ENCODE measurements at regions of chr5 and their contacts with region 1.

Region 1: GRCh38 chr5:132489871-132490485 is 595 bp downstream of the IRF1 start:
- DNase-seq: peak; percentile 91
- H3K4me3 ChIP-seq: peak overlapping the region; percentile 84 to 93 (median 90)
- H3K27ac ChIP-seq: peak overlapping the region; percentile 97 to 99 (median 98)
- H3K4me1 ChIP-seq: peaks cover 54 to 76% (median 74%) of the 10 kb centered on the region in 4 donors
- H3K27me3 ChIP-seq: no peaks in the 10 kb centered on the region
- CTCF ChIP-seq: peak; percentile 16 to 41 (median 32)
- EP300 ChIP-seq: no peak
- POLR2A ChIP-seq: no peak

Region 2: DNA sequence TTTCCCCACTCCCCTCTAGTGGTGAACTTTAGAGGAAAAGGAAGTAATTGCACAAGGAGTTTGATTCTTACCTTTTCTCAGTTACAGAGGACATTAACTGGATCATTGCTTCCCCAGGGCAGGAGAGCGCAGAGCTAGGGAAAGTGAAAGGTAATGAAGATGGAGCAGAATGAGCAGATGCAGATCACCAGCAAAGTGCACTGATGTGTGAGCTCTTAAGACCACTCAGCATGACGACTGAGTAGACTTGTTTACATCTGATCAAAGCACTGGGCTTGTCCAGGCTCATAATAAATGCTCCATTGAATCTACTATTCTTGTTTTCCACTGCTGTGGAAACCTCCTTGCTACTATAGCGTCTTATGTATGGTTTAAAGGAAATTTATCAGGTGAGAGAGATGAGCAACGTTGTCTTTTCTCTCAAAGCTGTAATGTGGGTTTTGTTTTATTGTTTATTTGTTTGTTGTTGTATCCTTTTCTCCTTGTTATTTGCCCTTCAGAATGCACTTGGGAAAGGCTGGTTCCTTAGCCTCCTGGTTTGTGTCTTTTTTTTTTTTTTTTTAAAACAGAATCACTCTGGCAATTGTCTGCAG is 95.2 kb before region 1 on chr5:
- intact Hi-C with region 1: no loop called
- DNase-seq: no peak
- H3K4me3 ChIP-seq: no peak overlapping the region
- H3K27ac ChIP-seq: no peak overlapping the region
- H3K4me1 ChIP-seq: peaks cover 9 to 18% (median 16%) of the 10 kb centered on the region in 4 donors
- H3K27me3 ChIP-seq: no peaks in the 10 kb centered on the region
- CTCF ChIP-seq: no peak
- EP300 ChIP-seq: no peak
- POLR2A ChIP-seq: no peak

Region 3: DNA sequence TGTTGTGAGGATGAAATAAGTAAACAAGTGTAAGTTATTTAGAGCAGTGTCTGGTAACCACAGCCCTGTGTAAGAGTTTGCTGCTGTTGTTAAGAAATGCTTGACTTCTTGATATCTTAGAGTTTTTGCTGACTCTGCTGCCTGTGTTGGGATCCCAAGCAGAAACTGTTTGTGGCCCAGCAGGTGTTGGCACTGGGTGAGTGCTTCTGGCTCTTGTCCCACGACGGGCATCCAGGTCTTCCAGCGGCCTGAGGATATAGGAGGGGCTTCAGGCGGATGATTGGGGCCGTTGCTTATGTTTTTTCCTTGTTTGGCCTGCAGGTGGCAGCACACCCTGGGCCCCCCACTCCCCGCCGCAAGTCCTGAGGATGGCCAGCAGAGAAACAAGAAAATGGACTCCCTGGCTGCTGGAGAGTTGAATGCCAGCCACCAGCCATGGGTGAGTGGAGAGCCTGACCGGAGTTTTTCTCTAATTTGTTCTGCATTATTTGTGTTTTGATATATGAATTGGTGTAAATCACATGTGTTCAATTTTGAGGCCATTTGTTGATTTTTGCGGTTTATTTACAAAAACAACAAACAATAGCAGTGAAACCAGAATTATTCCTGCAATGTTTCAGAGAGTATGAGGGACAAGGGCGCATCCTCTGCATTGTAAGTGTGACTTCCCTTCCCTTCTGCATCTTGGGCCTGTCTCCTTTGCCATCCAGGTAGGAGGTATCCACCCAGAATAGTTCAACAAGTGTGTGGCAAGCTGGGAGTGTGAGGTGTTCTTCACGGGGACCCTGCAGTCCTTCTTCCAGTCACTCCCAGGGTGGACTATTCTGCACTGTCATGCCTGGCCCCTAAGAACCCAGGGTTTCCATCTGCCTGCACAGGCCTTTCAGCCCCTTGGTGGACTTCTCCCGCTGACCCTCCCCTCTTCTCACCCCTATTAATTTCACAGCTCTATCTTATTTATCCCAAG is 70.2 kb before region 1 on chr5:
- intact Hi-C with region 1: loop called (anchors 2 kb)
- DNase-seq: peak; percentile 95
- H3K4me3 ChIP-seq: peak overlapping the region in 1 of 4 donors; percentile 7
- H3K27ac ChIP-seq: peak overlapping the region; percentile 65 to 99 (median 84)
- H3K4me1 ChIP-seq: peaks cover 94 to 100% (median 98%) of the 10 kb centered on the region in 4 donors
- H3K27me3 ChIP-seq: no peaks in the 10 kb centered on the region
- CTCF ChIP-seq: peak; percentile 79 to 85 (median 80)
- EP300 ChIP-seq: no peak
- POLR2A ChIP-seq: no peak

Measured in esophagus muscularis mucosa (tissue), 4 donors.